Posterior cingulate gyrus (tissue), 11 donors: ENCODE measurements at regions of chr4 and their contacts with region 1.

Region 1: GRCh38 chr4:30744957-30745640 is 24.9 kb downstream of the PCDH7 start:
- DNase-seq: no peak

Region 2: GRCh38 chr4:30653291-30653690 is 91.8 kb before region 1 on chr4:
- intact Hi-C with region 1: no loop called
- DNase-seq: no peak

Region 3: DNA sequence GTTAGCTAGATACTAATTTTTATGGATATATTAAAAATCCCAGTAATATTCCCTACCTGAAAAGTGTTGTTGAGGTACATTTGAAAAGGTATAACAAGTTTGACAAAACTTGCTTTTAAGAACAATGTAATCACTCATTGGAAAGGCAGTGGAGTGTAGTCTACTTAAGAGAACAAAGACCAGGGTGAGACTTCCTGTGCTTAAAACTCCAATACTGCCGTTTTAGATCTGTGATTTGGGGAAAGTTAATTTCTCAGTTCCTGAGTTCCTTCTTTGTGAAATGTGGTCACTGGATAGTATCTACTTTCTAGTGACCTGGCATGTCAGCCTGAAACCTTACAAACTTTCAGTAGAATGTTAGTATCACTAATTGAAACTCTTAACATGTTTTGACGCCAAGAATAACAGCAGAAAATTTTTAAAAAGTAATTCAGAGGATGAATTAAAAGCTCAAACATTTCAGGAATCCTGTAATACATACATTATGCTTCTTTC is 31.9 kb after region 1 on chr4:
- intact Hi-C with region 1: no loop called
- DNase-seq: no peak

Region 4: DNA sequence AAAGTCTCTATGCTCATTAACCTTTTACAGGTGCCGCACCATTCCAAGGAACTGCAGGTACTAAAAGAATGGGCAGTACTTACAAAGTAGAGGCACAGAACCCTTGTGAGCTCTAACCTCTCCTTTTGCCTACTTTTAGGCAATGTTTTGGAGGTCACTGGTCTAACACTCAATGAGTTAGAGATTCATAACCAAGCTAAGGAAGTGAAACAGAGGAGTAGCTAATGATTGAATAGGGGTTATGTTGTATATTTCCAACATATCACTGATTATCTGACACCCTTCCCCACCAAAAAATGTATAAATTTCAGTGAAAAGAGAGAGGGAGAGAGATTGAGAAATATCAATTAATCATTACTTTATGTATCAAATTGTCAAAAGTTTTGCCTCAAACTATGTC is 244.4 kb after region 1 on chr4:
- intact Hi-C with region 1: no loop called
- DNase-seq: no peak

Region 5: DNA sequence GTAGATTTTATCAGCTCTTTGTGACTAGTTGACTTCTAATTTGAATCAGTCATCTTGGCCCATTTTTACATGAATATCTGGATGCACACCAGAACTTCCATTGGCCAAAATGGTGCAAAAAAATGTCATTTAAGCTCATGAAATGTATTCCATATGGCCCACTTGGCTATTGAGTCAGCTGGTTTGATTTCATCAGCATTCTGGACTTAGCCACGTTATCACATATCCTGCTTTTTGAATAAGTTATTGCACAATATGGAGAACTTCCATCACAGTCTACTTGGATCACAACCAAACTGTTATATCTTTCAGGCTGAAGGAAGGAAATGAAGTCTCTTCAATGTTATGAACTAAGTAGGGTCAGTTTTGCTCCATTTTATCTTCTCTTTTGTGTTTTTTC is 615.7 kb after region 1 on chr4:
- intact Hi-C with region 1: loop called (anchors 10 kb)
- DNase-seq: no peak